Ascending aorta (tissue), 2 donors: ENCODE measurements at regions of chr2 and their contacts with region 1.

Region 1: DNA sequence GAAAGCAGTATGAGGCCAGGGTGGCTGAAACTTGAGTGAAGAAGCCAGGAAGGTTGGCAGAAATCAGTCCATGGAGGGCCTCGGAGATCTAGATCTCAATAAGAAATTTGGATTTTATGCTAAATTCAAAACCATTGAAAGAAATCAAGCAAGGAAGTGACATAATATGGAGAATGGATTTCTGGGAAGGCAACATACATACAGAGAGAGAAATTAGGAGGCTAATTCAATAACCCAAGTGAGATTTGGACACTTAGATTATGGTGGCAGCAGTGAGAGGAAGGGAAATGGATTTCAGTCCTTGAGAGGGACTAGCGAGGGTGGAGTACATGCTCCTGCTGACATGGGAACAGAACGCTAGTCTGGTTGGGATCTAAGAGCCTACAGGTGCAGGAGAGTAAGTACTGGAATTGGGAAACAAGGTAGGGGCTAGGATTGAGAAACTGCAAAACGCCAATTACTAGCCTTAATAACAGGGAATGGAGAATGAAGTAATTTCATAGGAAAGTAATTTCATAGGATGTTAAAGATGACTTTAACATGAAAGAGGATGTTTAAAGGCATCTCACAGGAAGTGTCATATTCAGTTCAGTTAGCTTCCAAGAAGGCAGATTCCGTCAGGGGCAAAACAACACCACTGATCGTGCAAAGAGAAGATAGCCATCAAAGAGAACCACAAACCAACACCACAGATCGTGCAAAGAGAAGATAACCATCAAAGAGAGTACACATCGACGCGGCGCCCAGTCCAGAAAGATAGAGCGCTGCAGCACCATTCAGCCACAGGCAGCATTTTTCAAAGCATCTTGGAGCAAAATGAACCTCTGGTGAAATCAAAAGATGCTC is 27.2 kb downstream of the CDKL4 start:
- DNase-seq: no peak
- H3K4me3 ChIP-seq: no peak overlapping the region
- H3K27ac ChIP-seq: no peak overlapping the region
- H3K4me1 ChIP-seq: no peaks in the 10 kb centered on the region
- H3K27me3 ChIP-seq: no peaks in the 10 kb centered on the region
- CTCF ChIP-seq: no peak

Region 2: GRCh38 chr2:39179974-39180970 is 36.3 kb before region 1 on chr2:
- intact Hi-C with region 1: loop called (anchors 5 kb)
- DNase-seq: no peak
- H3K4me3 ChIP-seq: no peak overlapping the region
- H3K27ac ChIP-seq: no peak overlapping the region
- H3K4me1 ChIP-seq: no peaks in the 10 kb centered on the region
- H3K27me3 ChIP-seq: no peaks in the 10 kb centered on the region
- CTCF ChIP-seq: no peak